PC-9 (cell line): ENCODE measurements at regions of chr21 and their contacts with region 1.

Region 1: DNA sequence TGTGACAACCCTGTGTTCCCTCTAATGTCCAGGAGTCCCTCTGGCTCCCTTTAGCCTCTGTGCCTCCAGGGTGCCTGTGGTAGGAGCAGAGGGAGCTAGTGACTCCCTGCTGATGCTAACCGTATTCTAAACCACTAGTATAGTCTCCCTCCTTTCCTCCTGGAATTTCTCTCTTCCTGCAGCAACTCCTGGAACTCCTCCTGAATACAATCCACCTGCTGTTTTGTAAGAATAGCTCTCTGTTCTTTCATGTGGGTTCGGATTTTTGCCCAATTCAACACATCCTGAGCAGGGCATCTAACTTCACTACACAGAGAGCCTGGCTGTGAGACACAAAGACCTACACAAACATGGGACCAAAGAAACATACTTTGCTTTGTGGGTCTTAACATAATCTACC is 107.9 kb downstream of the RUNX1 start:
- DNase-seq: no peak
- H3K4me3 ChIP-seq: no peak overlapping the region
- H3K27ac ChIP-seq: no peak overlapping the region
- H3K4me1 ChIP-seq: 0 out of 2 replicates have a peak, but pooled peaks cover 7% of the 10 kb centered on the region
- H3K27me3 ChIP-seq: no peaks in the 10 kb centered on the region
- CTCF ChIP-seq: no peak

Region 2: DNA sequence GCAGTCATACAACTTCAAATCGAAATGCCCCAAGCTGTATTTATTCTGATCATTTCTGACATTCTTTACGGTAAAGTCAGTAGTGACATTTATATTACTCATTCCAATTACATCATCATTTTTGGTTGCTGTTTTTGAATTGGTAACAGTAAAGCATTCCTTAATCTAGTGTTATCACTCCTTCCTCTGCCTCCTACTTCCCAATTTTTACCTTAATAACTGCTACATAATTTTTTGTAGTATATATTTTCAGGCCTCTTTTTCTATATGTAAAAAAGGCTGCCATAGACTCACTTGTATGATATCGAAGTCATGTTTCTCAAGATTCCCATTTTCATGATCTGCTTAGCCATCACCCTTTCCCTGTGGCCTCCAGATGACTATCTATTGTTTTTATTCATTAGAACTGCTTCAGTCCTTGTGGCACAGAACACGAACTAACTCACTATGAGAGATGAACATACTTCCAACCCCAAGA is 59.2 kb before region 1 on chr21:
- CTCF ChIA-PET with region 1: no interaction called
- POLR2A ChIA-PET with region 1: no interaction called
- intact Hi-C with region 1: no loop called
- DNase-seq: peak in 1 of 2 experiments; percentile 87
- H3K4me3 ChIP-seq: peak overlapping the region; percentile 97
- H3K27ac ChIP-seq: peak overlapping the region; percentile 99
- H3K4me1 ChIP-seq: peaks cover 69% of the 10 kb centered on the region
- H3K27me3 ChIP-seq: no peaks in the 10 kb centered on the region
- CTCF ChIP-seq: no peak

Region 3: GRCh38 chr21:34958040-34958439 is 16.9 kb after region 1 on chr21:
- CTCF ChIA-PET with region 1: no interaction called
- POLR2A ChIA-PET with region 1: no interaction called
- intact Hi-C with region 1: no loop called
- DNase-seq: no peak
- H3K4me3 ChIP-seq: no peak overlapping the region
- H3K27ac ChIP-seq: no peak overlapping the region
- H3K4me1 ChIP-seq: 0 out of 2 replicates have a peak, but pooled peaks cover 9% of the 10 kb centered on the region
- H3K27me3 ChIP-seq: no peaks in the 10 kb centered on the region
- CTCF ChIP-seq: no peak

Region 4: DNA sequence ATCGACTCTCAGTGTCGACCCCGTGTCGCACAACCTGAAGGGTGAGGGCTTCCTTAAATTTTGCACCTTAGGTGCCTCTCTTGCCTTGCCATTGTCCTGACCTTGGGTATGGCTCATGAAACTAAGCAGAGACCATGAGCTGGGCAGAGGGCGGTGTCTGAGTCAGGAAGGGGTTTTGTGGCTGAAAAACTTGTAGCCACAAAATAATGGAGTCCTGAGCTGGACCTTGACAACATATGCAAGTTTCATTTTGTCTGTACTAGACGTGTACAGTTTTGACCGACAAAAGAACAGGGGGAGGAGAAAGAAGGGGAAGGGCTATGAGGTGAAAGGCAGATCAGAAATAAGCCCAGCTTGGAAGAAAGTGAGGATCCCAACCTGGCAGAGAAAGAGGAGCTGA is 116.3 kb after region 1 on chr21:
- CTCF ChIA-PET with region 1: no interaction called
- POLR2A ChIA-PET with region 1: interaction called, 10 read pairs
- intact Hi-C with region 1: no loop called
- DNase-seq: no peak
- H3K4me3 ChIP-seq: no peak overlapping the region
- H3K27ac ChIP-seq: no peak overlapping the region
- H3K4me1 ChIP-seq: peaks cover 9% of the 10 kb centered on the region; the same call in 1 of the 2 replicates
- H3K27me3 ChIP-seq: no peaks in the 10 kb centered on the region
- CTCF ChIP-seq: no peak

Region 5: DNA sequence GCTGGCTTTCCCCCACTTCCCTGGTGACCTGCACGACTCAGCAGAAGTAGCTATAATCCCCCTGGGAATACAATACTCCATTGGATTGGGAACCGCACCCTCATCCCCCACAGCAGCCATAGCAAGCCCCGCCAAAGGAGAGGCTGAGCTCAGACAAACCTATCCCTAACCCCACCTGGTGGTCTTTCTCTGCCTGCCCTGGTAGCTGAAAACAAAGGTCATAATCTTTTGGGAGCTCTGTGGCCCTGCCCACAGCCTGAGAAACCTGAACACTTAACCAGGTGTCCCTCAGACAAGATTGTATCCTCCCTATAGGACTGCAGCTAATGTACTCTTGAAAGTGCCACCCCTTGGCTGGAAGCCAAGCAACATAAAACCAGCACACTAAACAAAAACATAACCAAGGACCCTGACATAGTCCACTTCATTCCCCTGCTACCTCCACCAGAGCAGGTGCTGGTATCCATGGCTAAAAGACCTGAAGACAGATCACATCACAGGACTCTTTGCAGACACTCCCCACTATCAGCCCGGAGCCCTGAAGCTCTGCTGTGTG is 179.5 kb after region 1 on chr21:
- CTCF ChIA-PET with region 1: no interaction called
- POLR2A ChIA-PET with region 1: no interaction called
- intact Hi-C with region 1: no loop called
- DNase-seq: no peak
- H3K4me3 ChIP-seq: no peak overlapping the region
- H3K27ac ChIP-seq: no peak overlapping the region
- H3K4me1 ChIP-seq: no peaks in the 10 kb centered on the region
- H3K27me3 ChIP-seq: no peaks in the 10 kb centered on the region
- CTCF ChIP-seq: no peak